Endothelial cell of umbilical vein (primary cell): ENCODE measurements at regions of chrX and their contacts with region 1.

Region 1: DNA sequence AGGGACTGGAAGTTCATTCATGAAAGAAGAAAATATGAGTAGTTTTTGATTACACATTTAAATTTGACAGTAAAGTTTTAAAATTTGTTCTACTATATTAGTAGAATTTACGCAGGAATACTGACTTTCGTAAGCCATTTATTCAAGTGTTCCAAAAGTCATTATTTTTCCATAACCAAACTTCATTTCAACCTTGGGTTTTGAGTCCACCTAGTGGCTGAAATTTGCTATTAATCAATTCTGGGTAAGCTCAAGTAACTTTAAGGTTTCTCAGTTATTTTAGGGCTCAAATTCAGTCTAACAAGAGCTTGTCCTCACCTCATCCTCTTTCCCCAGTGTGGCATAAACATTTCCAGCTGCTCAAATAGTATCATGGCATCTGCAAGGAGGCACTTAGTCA is 175.4 kb downstream of the SH3BGRL start:
- DNase-seq: peak; percentile 36
- H3K4me3 ChIP-seq: no peak overlapping the region
- H3K27ac ChIP-seq: no peak overlapping the region
- H3K4me1 ChIP-seq: no peaks in the 10 kb centered on the region
- H3K27me3 ChIP-seq: no peaks in the 10 kb centered on the region
- CTCF ChIP-seq: peak in 1 of 2 donors; percentile 23
- POLR2A ChIP-seq: no peak

Region 2: DNA sequence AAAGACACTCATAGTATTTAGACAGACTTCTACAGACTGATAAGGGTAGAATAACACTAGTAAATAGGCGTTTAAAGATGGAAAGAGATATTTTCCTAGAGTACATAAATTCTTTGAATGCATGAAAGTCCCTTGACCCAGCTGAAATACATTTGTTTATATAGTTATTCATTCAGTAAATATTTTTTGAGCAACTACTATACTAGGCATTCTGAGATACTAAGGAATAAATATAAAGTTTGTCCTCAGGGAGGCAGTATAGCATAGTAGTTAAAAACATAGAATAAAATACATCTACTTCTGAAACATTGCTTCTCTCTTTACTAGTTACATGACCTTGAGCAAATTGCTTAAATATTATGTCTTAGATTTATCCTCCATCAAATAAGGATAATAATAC is 203.0 kb before region 1 on chrX:
- CTCF ChIA-PET with region 1: interaction called, 21 read pairs
- POLR2A ChIA-PET with region 1: no interaction called
- dilution Hi-C with region 1: no loop called
- intact Hi-C with region 1: loop called (anchors 1 kb)
- DNase-seq: peak; percentile 14
- H3K4me3 ChIP-seq: no peak overlapping the region
- H3K27ac ChIP-seq: no peak overlapping the region
- H3K4me1 ChIP-seq: no peaks in the 10 kb centered on the region
- H3K27me3 ChIP-seq: no peaks in the 10 kb centered on the region
- CTCF ChIP-seq: no peak
- POLR2A ChIP-seq: no peak

Region 3: GRCh38 chrX:81195712-81196111 is 181.6 kb before region 1 on chrX:
- CTCF ChIA-PET with region 1: interaction called, 15 read pairs
- POLR2A ChIA-PET with region 1: no interaction called
- dilution Hi-C with region 1: no loop called
- intact Hi-C with region 1: loop called (anchors 5 kb)
- DNase-seq: peak; percentile 58
- H3K4me3 ChIP-seq: no peak overlapping the region
- H3K27ac ChIP-seq: no peak overlapping the region
- H3K4me1 ChIP-seq: no peaks in the 10 kb centered on the region
- H3K27me3 ChIP-seq: no peaks in the 10 kb centered on the region
- CTCF ChIP-seq: peak; percentile 33 to 54
- POLR2A ChIP-seq: no peak

Region 4: GRCh38 chrX:81414630-81415029 is 37.3 kb after region 1 on chrX:
- CTCF ChIA-PET with region 1: no interaction called
- POLR2A ChIA-PET with region 1: no interaction called
- dilution Hi-C with region 1: no loop called
- intact Hi-C with region 1: no loop called
- DNase-seq: no peak
- H3K4me3 ChIP-seq: no peak overlapping the region
- H3K27ac ChIP-seq: no peak overlapping the region
- H3K4me1 ChIP-seq: no peaks in the 10 kb centered on the region
- H3K27me3 ChIP-seq: no peaks in the 10 kb centered on the region
- CTCF ChIP-seq: no peak
- POLR2A ChIP-seq: no peak